Sigmoid colon (tissue), 7 donors: ENCODE measurements at regions of chr7 and their contacts with region 1.

Region 1: DNA sequence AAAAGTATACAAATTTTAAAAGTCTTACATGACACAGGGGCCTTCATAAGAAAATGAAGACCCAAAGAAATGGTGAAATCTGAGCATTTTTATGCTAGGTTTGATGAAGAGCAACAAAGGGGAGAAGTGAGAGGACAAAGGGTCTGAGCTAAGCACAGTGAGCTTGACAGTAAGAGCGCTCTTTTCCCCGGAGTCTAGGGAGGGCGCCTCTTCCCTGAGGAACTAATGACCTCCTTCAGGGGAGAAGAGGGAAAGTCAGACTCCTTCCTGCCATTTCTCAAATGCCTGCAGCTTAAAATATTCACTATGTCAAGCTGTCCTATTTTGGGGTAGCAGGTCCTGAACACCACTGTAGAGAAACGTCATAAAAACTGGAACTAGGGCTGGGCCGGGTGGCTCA is 18.1 kb upstream of the PAXIP1 start:
- DNase-seq: no peak
- H3K4me3 ChIP-seq: no peak overlapping the region
- H3K27ac ChIP-seq: no peak overlapping the region
- H3K4me1 ChIP-seq: no peaks in the 10 kb centered on the region
- H3K27me3 ChIP-seq: no peaks in the 10 kb centered on the region
- CTCF ChIP-seq: no peak
- EP300 ChIP-seq: no peak
- POLR2A ChIP-seq: no peak

Region 2: DNA sequence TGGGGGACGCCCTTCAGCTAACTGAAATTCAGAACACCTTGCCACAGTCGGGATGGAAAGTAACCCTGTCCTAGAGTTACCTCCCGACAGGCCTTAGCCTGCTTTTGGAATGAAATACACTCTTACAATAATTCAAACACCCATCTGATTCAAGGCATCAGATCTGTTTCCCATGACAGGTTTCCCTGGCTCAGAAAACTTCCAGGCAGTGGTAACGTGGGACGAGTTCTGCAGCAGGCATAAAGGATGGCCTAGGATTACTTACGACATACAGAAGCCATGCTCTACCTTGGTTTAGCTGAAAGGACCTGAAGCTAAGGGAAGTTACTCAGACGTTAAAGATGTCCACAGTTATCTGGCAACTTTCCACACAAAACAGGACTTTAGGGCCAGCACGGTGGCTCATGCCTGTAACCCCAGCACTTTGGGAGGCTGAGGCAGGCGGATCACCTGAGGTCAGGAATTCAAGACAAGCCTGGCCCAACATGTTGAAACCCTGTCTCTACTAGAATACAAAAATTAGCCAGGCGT is 23.1 kb before region 1 on chr7:
- intact Hi-C with region 1: loop called (anchors 1 kb)
- DNase-seq: no peak
- H3K4me3 ChIP-seq: no peak overlapping the region
- H3K27ac ChIP-seq: no peak overlapping the region
- H3K4me1 ChIP-seq: peaks cover 0 to 10% (median 7%) of the 10 kb centered on the region in 4 donors
- H3K27me3 ChIP-seq: no peaks in the 10 kb centered on the region
- CTCF ChIP-seq: no peak
- EP300 ChIP-seq: no peak
- POLR2A ChIP-seq: no peak